ENCODE measurements at regions of chrX and their contacts with region 1.

Region 1: GRCh38 chrX:129606918-129607317 is 47.8 kb downstream of the APLN start:
- DNase-seq: peak; percentile 17 to 78 (median 44)
- ATAC-seq: peak; percentile 52
- H3K4me3 ChIP-seq: no peak overlapping the region
- H3K4me3 Mint-ChIP-seq: no peak overlapping the region
- H3K27ac ChIP-seq: no peak overlapping the region
- H3K27ac Mint-ChIP-seq: peak overlapping the region; percentile 5
- H3K4me1 ChIP-seq: peaks cover 25% of the 10 kb centered on the region
- H3K4me1 Mint-ChIP-seq: peaks cover 28% of the 10 kb centered on the region
- H3K27me3 ChIP-seq: no peaks in the 10 kb centered on the region
- H3K27me3 Mint-ChIP-seq: no peaks in the 10 kb centered on the region
- CTCF ChIP-seq: peak; percentile 54

Region 2: DNA sequence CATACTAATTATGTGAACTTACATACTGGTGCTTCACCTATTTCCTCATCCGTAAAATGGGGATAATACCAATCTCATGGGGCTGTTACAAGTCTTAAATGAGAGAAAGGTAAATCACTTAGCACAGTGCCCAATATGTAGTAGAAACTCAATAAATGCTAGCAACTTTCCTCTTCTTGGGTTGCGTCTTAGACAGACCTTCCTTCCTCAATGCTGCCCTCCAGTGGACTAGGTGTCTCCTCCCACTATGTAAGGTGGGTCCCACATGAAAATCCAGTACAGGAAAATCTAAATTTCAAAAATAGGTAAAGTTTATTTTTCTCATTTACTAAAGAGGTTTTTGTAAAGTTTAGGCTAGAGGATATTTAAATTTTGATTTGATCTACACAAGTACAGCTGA is 216.2 kb after region 1 on chrX:
- CTCF ChIA-PET with region 1: interaction called, 3 read pairs
- POLR2A ChIA-PET with region 1: no interaction called
- intact Hi-C with region 1: loop called in 1 of 2 experiments (anchors 1 kb)
- DNase-seq: peak; percentile 16 to 80 (median 43)
- ATAC-seq: peak; percentile 76
- H3K4me3 ChIP-seq: no peak overlapping the region
- H3K4me3 Mint-ChIP-seq: no peak overlapping the region
- H3K27ac ChIP-seq: no peak overlapping the region
- H3K27ac Mint-ChIP-seq: no peak overlapping the region
- H3K4me1 ChIP-seq: peaks cover 5% of the 10 kb centered on the region
- H3K4me1 Mint-ChIP-seq: peaks cover 18% of the 10 kb centered on the region
- H3K27me3 ChIP-seq: no peaks in the 10 kb centered on the region
- H3K27me3 Mint-ChIP-seq: no peaks in the 10 kb centered on the region
- CTCF ChIP-seq: peak; percentile 73

Region 3: DNA sequence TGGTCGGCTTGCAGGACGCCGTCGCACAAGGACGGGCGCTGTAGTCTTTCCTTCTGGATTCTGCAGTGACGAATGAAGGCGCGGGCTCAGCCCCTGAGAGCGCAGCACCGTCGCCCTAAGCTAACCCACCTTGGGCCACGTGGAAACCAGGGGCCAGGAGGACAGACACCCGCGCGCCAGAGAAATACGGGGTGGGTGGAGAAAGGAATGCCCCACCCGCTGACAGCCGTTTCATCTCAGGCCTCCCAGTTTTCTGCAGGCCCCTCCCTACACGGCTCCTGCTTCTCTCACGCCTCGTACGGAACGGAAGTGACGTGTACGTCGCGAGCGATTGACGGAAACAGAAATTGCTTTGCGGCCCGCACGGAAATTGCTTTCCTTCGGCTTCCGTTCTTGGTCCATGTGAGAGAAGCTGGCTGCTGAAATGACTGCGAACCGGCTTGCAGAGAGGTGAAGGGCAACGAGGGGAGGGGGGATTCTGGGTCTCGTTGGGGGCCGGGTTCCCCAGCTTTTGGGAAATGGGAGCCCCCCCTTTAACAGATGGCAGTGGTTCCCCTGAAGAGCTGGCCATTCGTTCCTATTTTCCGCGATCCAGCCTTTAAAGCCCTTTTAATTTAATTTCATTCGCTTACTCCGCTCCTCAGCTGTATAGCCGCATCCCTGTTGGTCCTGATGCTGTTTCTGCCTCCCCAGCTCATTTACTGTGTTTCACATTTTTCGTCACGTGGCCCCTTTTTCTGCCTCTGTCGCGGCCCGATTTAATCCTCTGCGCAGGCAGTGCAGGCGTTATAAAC is 299.1 kb after region 1 on chrX and contains the start of gene UTP14A:
- CTCF ChIA-PET with region 1: no interaction called
- POLR2A ChIA-PET with region 1: interaction called, 3 read pairs
- intact Hi-C with region 1: loop called (anchors 5 kb)
- DNase-seq: peak; percentile 61 to 94 (median 76)
- ATAC-seq: peak; percentile 91
- H3K4me3 ChIP-seq: peak within 1 kb of the TSS; percentile 74
- H3K4me3 Mint-ChIP-seq: peak within 1 kb of the TSS; percentile 94
- H3K27ac ChIP-seq: peak within 1 kb of the TSS; percentile 37 to 41
- H3K27ac Mint-ChIP-seq: peak within 1 kb of the TSS; percentile 84
- H3K4me1 ChIP-seq: peaks cover 10% of the 10 kb centered on the region
- H3K4me1 Mint-ChIP-seq: peaks cover 7% of the 10 kb centered on the region
- H3K27me3 ChIP-seq: no peaks in the 10 kb centered on the region
- H3K27me3 Mint-ChIP-seq: no peaks in the 10 kb centered on the region
- CTCF ChIP-seq: no peak
- total RNA-seq, gene UTP14A: 8.8 to 9.8 TPM

Region 4: DNA sequence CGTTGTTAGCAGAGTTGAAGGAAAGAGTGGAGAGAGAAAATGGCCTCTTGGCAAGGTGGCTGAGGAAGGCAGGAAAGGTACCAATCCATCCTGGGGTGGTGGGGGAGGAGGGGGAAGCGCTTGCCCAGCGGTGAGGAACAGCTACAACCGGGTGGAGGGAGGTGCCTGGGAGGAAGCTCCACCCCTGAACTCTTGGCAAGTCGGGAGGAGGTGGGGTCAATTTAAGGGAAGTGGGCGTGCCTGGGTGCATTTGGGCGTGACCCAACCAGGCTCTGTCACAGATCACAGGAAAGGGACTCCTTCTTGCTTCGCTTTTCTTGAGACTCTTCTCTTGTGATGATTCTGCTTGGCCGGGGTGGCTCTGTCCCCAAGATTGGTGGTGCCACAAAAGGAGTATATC is 417.2 kb after region 1 on chrX:
- CTCF ChIA-PET with region 1: no interaction called
- POLR2A ChIA-PET with region 1: no interaction called
- intact Hi-C with region 1: loop called (anchors 10 kb)
- DNase-seq: peak; percentile 57 to 92 (median 78)
- ATAC-seq: peak; percentile 100
- H3K4me3 ChIP-seq: no peak overlapping the region
- H3K4me3 Mint-ChIP-seq: no peak overlapping the region
- H3K27ac ChIP-seq: no peak overlapping the region
- H3K27ac Mint-ChIP-seq: peak overlapping the region; percentile 24
- H3K4me1 ChIP-seq: peaks cover 12% of the 10 kb centered on the region
- H3K4me1 Mint-ChIP-seq: peaks cover 17% of the 10 kb centered on the region
- H3K27me3 ChIP-seq: no peaks in the 10 kb centered on the region
- H3K27me3 Mint-ChIP-seq: no peaks in the 10 kb centered on the region
- CTCF ChIP-seq: no peak

Region 5: GRCh38 chrX:130060122-130061069 is 453.5 kb after region 1 on chrX:
- CTCF ChIA-PET with region 1: no interaction called
- POLR2A ChIA-PET with region 1: no interaction called
- intact Hi-C with region 1: loop called in 1 of 2 experiments (anchors 2 kb)
- DNase-seq: peak; percentile 50 to 87 (median 77)
- ATAC-seq: peak; percentile 82
- H3K4me3 ChIP-seq: peak overlapping the region; percentile 45
- H3K4me3 Mint-ChIP-seq: peak overlapping the region; percentile 71
- H3K27ac ChIP-seq: no peak overlapping the region
- H3K27ac Mint-ChIP-seq: no peak overlapping the region
- H3K4me1 ChIP-seq: peaks cover 13% of the 10 kb centered on the region
- H3K4me1 Mint-ChIP-seq: peaks cover 10% of the 10 kb centered on the region
- H3K27me3 ChIP-seq: no peaks in the 10 kb centered on the region
- H3K27me3 Mint-ChIP-seq: no peaks in the 10 kb centered on the region
- CTCF ChIP-seq: peak; percentile 78

Region 6: DNA sequence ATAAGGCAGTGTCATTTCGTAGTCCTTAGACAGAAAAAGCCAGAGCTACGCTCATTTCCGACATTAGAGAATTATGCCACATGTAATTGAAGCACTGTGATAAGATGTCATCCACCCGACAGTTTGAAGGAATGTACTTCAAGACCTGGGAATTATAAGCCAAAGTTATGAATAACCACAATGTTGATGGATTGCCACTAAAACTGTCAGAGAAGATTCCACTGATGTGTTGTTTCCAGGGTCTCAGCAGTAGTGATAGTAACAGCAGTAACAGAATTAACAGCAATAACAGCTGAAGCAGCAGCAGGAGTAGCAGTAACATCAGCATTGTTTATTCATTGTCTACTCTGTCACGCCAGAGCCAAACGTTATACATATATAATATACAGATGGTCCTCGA is 589.5 kb after region 1 on chrX:
- CTCF ChIA-PET with region 1: no interaction called
- POLR2A ChIA-PET with region 1: no interaction called
- intact Hi-C with region 1: loop called (anchors 1 to 2 kb)
- DNase-seq: no peak
- ATAC-seq: no peak
- H3K4me3 ChIP-seq: no peak overlapping the region
- H3K4me3 Mint-ChIP-seq: no peak overlapping the region
- H3K27ac ChIP-seq: no peak overlapping the region
- H3K27ac Mint-ChIP-seq: no peak overlapping the region
- H3K4me1 ChIP-seq: no peaks in the 10 kb centered on the region
- H3K4me1 Mint-ChIP-seq: peaks cover 5% of the 10 kb centered on the region
- H3K27me3 ChIP-seq: no peaks in the 10 kb centered on the region
- H3K27me3 Mint-ChIP-seq: no peaks in the 10 kb centered on the region
- CTCF ChIP-seq: no peak

Region 7: GRCh38 chrX:130916636-130917422 is 1309.9 kb after region 1 on chrX:
- CTCF ChIA-PET with region 1: no interaction called
- POLR2A ChIA-PET with region 1: no interaction called
- intact Hi-C with region 1: loop called in 1 of 2 experiments (anchors 10 kb)
- DNase-seq: peak; percentile 4 to 75 (median 18)
- ATAC-seq: peak; percentile 56
- H3K4me3 ChIP-seq: no peak overlapping the region
- H3K4me3 Mint-ChIP-seq: no peak overlapping the region
- H3K27ac ChIP-seq: no peak overlapping the region
- H3K27ac Mint-ChIP-seq: no peak overlapping the region
- H3K4me1 ChIP-seq: no peaks in the 10 kb centered on the region
- H3K4me1 Mint-ChIP-seq: no peaks in the 10 kb centered on the region
- H3K27me3 ChIP-seq: no peaks in the 10 kb centered on the region
- H3K27me3 Mint-ChIP-seq: peaks cover 4% of the 10 kb centered on the region
- CTCF ChIP-seq: peak; percentile 57